ENCODE measurements at regions of chr2 and their contacts with region 1.

Region 1: DNA sequence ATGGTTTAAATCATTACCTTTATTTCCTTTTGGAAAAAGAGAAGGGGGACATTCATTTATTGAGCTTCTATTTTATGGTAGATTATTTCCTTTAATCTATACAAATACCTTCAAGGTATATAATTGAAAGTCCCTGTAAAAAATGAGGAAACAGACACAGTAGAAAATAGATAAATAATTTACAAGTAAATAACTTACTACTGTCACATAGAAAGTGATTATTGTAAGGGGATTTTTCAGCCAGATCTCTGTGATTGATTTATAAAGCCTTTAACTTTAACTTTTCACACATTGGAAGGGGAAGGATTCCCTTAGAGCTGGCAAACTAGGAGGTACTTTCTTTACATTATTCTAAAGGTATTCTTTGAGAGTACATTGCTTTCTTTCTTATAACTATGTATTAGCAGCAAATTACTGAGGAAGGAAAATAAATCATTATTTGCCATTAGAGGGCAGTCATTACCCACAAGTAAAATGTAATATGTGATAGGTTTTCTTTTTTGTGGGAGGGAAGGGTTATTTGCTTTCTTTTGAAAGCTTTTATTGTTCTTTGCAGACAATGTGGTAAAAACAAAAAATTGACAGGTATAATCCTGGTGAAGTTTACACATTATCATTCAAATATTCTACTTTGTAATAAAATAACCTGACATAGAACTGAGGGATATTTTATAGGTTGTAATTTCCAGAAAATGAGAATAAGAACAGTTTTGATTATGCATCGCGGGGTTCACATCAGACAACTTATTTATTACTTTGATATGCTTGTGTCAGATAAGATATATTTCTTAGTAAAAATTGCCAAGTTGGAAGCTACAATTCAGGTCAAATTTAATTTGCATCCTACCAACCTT is 24.8 kb upstream of the RPE start:
- DNase-seq: peak in 3 of 14 experiments; percentile 59 to 70 (median 63)
- ATAC-seq: no peak
- H3K4me3 ChIP-seq: no peak overlapping the region
- H3K4me3 Mint-ChIP-seq: no peak overlapping the region
- H3K27ac ChIP-seq: no peak overlapping the region
- H3K27ac Mint-ChIP-seq: no peak overlapping the region
- H3K4me1 ChIP-seq: no peaks in the 10 kb centered on the region
- H3K4me1 Mint-ChIP-seq: no peaks in the 10 kb centered on the region
- H3K27me3 ChIP-seq: no peaks in the 10 kb centered on the region
- H3K27me3 Mint-ChIP-seq: peaks cover 10% of the 10 kb centered on the region
- CTCF ChIP-seq: peak; percentile 73

Region 2: DNA sequence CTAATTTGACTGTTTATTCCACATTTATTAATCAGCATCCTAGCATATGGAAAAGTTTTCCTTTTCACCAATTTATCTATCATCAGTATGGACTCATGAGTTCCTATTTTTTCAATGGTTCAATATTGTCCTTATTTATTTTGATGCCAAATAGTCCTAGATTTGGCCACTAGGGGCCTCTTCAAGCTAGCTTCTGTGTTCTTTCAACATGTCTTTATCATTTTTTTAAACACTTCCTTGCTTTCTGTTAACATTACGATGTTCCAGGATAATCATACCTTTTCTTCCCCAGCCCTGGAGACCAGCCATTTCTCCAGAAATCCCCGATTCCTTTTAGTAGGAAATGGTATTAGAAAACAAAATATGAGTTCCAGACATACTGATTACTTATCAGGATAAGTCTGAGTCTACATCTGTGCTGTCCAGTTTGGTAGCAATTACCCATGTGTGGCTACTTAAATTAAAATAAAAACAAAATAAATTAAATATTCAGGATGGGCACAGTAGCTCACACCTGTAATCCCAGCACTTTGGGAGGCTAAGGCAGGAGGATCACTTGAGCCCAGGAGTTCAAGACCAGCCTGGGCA is 95.4 kb after region 1 on chr2:
- CTCF ChIA-PET with region 1: no interaction called
- POLR2A ChIA-PET with region 1: no interaction called
- intact Hi-C with region 1: loop called in 1 of 2 experiments (anchors 10 kb)
- DNase-seq: peak in 3 of 14 experiments; percentile 4 to 23 (median 13)
- ATAC-seq: no peak
- H3K4me3 ChIP-seq: no peak overlapping the region
- H3K4me3 Mint-ChIP-seq: no peak overlapping the region
- H3K27ac ChIP-seq: no peak overlapping the region
- H3K27ac Mint-ChIP-seq: no peak overlapping the region
- H3K4me1 ChIP-seq: no peaks in the 10 kb centered on the region
- H3K4me1 Mint-ChIP-seq: no peaks in the 10 kb centered on the region
- H3K27me3 ChIP-seq: no peaks in the 10 kb centered on the region
- H3K27me3 Mint-ChIP-seq: no peaks in the 10 kb centered on the region
- CTCF ChIP-seq: peak; percentile 55

Measured in CD4-positive, alpha-beta T cell (primary cell).